ENCODE measurements at regions of chr2 and their contacts with region 1.

Region 1: DNA sequence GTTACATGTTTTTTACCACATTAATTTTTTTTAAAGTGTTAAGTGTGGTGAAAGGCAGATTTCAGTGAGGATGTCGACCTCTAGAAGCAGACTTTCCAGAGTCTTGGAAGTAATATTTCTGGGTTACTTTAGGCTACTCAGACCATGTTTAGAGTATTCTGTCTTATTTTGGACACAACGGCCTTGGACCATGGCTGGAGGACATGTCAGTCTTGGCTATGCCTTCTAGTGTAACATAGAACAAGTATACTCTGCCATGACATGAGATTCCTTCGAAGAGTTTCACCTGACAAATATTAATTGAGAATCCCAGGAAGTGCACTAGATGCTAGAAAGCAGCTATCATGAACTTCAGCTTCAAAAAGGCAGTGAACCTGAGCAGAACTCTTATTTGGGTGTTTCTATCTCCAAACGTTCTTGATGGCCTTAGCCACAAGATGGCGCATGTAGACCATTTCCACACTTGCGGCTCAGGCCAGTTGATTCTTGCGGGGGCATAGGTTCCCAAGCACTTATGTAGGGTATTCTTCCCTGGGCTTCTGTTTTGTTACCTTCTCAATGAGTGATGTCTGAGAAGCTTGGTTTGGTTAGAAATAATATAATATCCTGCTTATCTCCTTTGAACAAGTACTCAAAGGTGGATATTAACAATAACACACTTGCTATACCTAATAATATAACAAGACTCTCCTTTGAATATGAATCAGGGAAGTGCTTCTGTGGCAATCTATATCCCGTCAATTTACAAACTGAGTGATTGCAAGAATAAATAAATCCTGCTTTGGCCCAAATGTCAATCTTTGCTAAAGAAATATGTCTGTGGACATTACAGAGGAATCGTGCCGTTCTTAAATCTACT is 62.0 kb downstream of the CACNB4 start:
- DNase-seq: peak; percentile 73 to 81
- H3K4me3 ChIP-seq: no peak overlapping the region
- H3K27ac ChIP-seq: no peak overlapping the region
- H3K4me1 ChIP-seq: peaks cover 0 to 10% (median 3%) of the 10 kb centered on the region in 4 donors
- H3K27me3 ChIP-seq: peaks cover 0 to 5% of the 10 kb centered on the region in 2 donors
- CTCF ChIP-seq: peak; percentile 68 to 80

Region 2: GRCh38 chr2:152175458-152176325 is 138.9 kb after region 1 on chr2 and contains the start of gene STAM2:
- intact Hi-C with region 1: loop called (anchors 10 kb)
- DNase-seq: peak; percentile 88 to 96
- H3K4me3 ChIP-seq: peak within 1 kb of the TSS; percentile 73 to 75
- H3K27ac ChIP-seq: peak within 1 kb of the TSS; percentile 92 to 93
- H3K4me1 ChIP-seq: peaks cover 0 to 35% (median 14%) of the 10 kb centered on the region in 4 donors
- H3K27me3 ChIP-seq: no peaks in the 10 kb centered on the region
- CTCF ChIP-seq: peak; percentile 95 to 97